Dorsolateral prefrontal cortex (tissue), 120 donors: ENCODE measurements at regions of chr5 and their contacts with region 1.

Region 1: GRCh38 chr5:91419571-91420537 is 36.7 kb upstream of the ARRDC3 start:
- DNase-seq: peak in 9 of 10 donors; percentile 22 to 62 (median 54)
- H3K4me3 ChIP-seq: no peak overlapping the region
- H3K27ac ChIP-seq: no peak overlapping the region
- H3K27me3 ChIP-seq: no peaks in the 10 kb centered on the region
- CTCF ChIP-seq: peak; percentile 75 to 99 (median 89)

Region 2: GRCh38 chr5:90866333-90866732 is 553.5 kb before region 1 on chr5:
- intact Hi-C with region 1: loop called (anchors 5 kb)
- DNase-seq: no peak
- H3K4me3 ChIP-seq: peak overlapping the region in 11 of 59 donors; percentile 7 to 37 (median 26)
- H3K27ac ChIP-seq: no peak overlapping the region
- H3K27me3 ChIP-seq: no peaks in the 10 kb centered on the region
- CTCF ChIP-seq: peak; percentile 33 to 76 (median 62)

Region 3: DNA sequence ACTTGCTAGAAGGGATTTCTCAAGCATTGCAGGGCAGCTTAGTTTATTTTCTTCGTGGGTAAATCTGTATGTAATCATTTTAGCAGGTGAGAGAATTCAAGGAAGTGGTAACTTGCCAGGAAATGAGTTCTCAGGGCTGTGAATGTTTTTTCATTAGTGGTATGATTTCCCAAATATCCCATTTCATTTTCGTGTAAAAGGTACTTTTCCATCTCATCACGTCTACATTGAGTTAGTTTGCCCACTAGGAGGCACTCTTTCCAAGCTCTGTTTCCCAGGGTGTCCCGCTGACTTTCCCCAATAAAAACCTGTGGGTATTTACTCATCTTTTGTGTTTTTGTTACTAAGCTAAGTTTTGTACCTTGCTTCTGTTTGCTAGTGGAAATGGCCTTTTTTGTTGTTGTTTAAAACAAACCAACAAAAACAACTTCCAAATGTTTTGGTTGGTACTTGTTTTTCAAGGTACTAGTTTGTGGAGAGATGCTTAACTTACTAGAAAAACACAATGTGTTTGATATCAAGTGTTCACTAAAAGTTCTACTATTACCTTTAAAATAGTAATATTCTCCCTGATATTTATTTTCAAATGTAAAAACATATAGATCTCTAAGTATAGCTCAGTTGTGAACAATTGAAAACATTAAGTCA is 487.7 kb before region 1 on chr5:
- intact Hi-C with region 1: loop called in 1 of 2 experiments (anchors 5 kb)
- DNase-seq: peak in 1 of 10 donors; percentile 21
- H3K4me3 ChIP-seq: no peak overlapping the region
- H3K27ac ChIP-seq: no peak overlapping the region
- H3K27me3 ChIP-seq: no peaks in the 10 kb centered on the region
- CTCF ChIP-seq: peak; percentile 62 to 88 (median 76)

Region 4: GRCh38 chr5:91200692-91201091 is 219.2 kb before region 1 on chr5:
- intact Hi-C with region 1: no loop called
- DNase-seq: no peak
- H3K4me3 ChIP-seq: no peak overlapping the region
- H3K27ac ChIP-seq: no peak overlapping the region
- H3K27me3 ChIP-seq: no peaks in the 10 kb centered on the region
- CTCF ChIP-seq: no peak